Activated CD4-positive, alpha-beta T cell treated with anti-CD3 and anti-CD28 coated beads, Interleukin-2, amount 10 ng/mL, durations not matched to agents 7 days and 5 days (primary cell): ENCODE measurements at regions of chr12 and their contacts with region 1.

Region 1: DNA sequence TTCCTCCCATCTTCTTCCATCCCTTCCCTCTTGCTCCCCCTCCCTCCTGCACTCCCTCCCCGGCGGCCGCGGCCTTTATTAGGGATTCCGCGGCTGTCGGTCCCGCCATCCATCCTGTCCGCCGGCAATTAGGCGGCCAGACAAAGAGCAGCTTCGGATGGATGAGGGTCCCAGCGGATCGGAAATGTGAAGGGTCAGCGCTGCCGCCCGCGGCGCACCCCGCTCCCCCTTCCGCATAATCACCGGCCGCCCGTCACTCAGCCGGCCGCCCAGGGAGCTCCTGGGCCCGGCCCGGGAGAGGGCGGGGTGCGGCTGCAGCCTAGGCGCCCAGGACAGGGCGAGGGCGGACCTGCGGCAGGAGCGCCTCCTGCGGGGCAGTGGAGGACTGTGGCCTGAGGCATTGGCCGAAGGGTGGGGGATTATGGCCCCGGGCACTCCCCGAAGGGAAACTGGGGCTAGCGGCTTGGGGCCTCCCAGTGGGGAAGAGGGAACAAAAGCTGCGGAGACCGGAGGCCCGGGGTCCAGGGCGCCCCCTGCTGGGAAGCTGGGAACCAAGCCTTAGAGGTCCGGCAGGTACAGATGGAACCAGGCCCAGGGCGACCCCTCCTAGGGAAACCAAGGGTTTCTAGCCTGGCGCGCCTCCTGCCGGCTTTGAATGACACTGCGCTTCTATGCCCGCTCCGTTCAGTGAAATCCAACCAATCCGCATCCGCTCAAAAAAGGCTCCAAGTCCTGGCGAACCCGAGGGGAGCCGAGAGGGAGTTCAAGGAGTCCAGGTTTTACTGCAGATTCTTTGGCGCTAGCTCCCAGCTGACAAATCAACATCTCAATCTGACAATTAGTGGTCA is 4.4 kb upstream of the DNAJC22 start:
- DNase-seq: peak; percentile 75
- H3K4me3 Mint-ChIP-seq: peak overlapping the region; percentile 27
- H3K27ac Mint-ChIP-seq: no peak overlapping the region
- H3K4me1 Mint-ChIP-seq: peaks cover 34% of the 10 kb centered on the region
- H3K27me3 Mint-ChIP-seq: peaks cover 89% of the 10 kb centered on the region

Region 2: GRCh38 chr12:49225556-49226181 is 116.6 kb before region 1 on chr12:
- CTCF ChIA-PET with region 1: no interaction called
- POLR2A ChIA-PET with region 1: no interaction called
- DNase-seq: no peak
- H3K4me3 Mint-ChIP-seq: no peak overlapping the region
- H3K27ac Mint-ChIP-seq: no peak overlapping the region
- H3K4me1 Mint-ChIP-seq: no peaks in the 10 kb centered on the region
- H3K27me3 Mint-ChIP-seq: no peaks in the 10 kb centered on the region

Region 3: DNA sequence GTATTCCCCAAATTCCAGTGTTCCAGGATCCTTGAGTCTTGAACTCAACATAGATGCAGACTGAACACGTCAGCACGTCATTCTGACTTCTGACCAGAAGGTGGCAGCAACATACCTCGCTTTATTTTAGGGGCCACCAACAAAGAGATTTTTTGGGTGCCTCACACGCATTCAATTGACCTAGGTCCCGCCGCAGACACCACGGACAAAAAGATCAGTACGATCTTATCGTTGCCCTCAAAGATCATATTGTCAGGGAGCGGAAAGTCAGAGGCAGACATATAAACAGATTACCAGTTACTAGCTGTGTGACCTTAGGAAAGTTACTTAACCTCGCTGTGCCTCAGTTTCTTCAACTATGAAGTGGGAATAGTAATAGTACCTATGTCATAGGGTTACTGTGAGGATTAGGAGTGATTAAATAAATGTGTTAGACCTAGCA is 53.9 kb before region 1 on chr12:
- CTCF ChIA-PET with region 1: interaction called, 47 read pairs
- POLR2A ChIA-PET with region 1: interaction called, 6 read pairs
- DNase-seq: peak; percentile 81
- H3K4me3 Mint-ChIP-seq: no peak overlapping the region
- H3K27ac Mint-ChIP-seq: no peak overlapping the region
- H3K4me1 Mint-ChIP-seq: peaks cover 3% of the 10 kb centered on the region
- H3K27me3 Mint-ChIP-seq: peaks cover 31% of the 10 kb centered on the region

Region 4: GRCh38 chr12:49296034-49296835 is 46.1 kb before region 1 on chr12:
- CTCF ChIA-PET with region 1: interaction called, 47 read pairs
- POLR2A ChIA-PET with region 1: interaction called, 6 read pairs
- DNase-seq: peak; percentile 61
- H3K4me3 Mint-ChIP-seq: peak overlapping the region; percentile 56
- H3K27ac Mint-ChIP-seq: no peak overlapping the region
- H3K4me1 Mint-ChIP-seq: peaks cover 29% of the 10 kb centered on the region
- H3K27me3 Mint-ChIP-seq: peaks cover 53% of the 10 kb centered on the region

Region 5: GRCh38 chr12:49331380-49332222 is 10.7 kb before region 1 on chr12:
- CTCF ChIA-PET with region 1: interaction called, 30 read pairs
- POLR2A ChIA-PET with region 1: no interaction called
- DNase-seq: no peak
- H3K4me3 Mint-ChIP-seq: no peak overlapping the region
- H3K27ac Mint-ChIP-seq: peak overlapping the region; percentile 34
- H3K4me1 Mint-ChIP-seq: peaks cover 21% of the 10 kb centered on the region
- H3K27me3 Mint-ChIP-seq: peaks cover 38% of the 10 kb centered on the region

Region 6: GRCh38 chr12:49358483-49359141 is 16.3 kb after region 1 on chr12:
- CTCF ChIA-PET with region 1: interaction called, 36 read pairs
- POLR2A ChIA-PET with region 1: no interaction called
- DNase-seq: peak; percentile 73
- H3K4me3 Mint-ChIP-seq: no peak overlapping the region
- H3K27ac Mint-ChIP-seq: no peak overlapping the region
- H3K4me1 Mint-ChIP-seq: peaks cover 3% of the 10 kb centered on the region
- H3K27me3 Mint-ChIP-seq: peaks cover 33% of the 10 kb centered on the region

Region 7: DNA sequence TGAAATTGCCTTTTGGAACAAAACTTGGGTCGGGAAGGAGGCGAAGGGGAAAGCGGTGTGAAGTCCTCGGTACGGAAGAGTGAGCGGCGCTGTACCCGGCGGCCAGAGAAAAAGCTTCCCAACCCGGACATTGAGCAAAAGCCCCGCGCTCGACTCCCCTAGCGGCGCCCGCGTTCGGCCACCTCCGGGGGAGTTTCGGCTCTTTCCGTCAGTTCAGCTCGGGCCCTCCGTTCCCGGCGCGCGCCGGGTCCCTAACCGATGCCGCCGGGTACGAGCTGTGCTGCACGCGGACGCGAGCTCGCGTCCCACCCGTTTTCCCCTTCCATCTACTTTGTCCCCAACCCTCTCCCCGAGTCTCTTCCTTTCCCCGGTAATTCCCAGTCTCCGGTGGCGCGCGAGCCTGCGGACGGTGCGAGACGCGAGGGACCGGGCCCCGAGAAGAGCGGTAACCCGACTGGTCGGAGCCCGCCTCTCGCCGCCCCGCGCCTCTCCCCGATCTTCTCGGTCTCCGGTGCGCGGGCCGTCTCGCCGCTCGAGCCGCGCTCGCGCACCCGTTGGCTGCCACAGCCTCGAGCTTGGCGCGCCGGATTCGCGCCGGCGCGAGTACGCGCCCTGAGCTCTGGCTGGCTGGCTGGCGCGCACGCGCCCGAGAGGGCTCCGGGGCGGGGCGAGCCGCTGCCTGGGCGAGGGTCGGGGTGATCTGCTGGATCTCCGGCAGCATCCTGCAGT is 24.5 kb after region 1 on chr12:
- CTCF ChIA-PET with region 1: interaction called, 14 read pairs
- POLR2A ChIA-PET with region 1: no interaction called
- DNase-seq: peak; percentile 88
- H3K4me3 Mint-ChIP-seq: peak overlapping the region; percentile 90
- H3K27ac Mint-ChIP-seq: peak overlapping the region; percentile 97
- H3K4me1 Mint-ChIP-seq: peaks cover 43% of the 10 kb centered on the region
- H3K27me3 Mint-ChIP-seq: no peaks in the 10 kb centered on the region

Region 8: GRCh38 chr12:49580572-49581535 is 238.6 kb after region 1 on chr12:
- CTCF ChIA-PET with region 1: no interaction called
- POLR2A ChIA-PET with region 1: no interaction called
- DNase-seq: peak; percentile 75
- H3K4me3 Mint-ChIP-seq: no peak overlapping the region
- H3K27ac Mint-ChIP-seq: peak overlapping the region; percentile 22
- H3K4me1 Mint-ChIP-seq: peaks cover 22% of the 10 kb centered on the region
- H3K27me3 Mint-ChIP-seq: no peaks in the 10 kb centered on the region